ENCODE measurements at regions of chr3 and their contacts with region 1.

Region 1: DNA sequence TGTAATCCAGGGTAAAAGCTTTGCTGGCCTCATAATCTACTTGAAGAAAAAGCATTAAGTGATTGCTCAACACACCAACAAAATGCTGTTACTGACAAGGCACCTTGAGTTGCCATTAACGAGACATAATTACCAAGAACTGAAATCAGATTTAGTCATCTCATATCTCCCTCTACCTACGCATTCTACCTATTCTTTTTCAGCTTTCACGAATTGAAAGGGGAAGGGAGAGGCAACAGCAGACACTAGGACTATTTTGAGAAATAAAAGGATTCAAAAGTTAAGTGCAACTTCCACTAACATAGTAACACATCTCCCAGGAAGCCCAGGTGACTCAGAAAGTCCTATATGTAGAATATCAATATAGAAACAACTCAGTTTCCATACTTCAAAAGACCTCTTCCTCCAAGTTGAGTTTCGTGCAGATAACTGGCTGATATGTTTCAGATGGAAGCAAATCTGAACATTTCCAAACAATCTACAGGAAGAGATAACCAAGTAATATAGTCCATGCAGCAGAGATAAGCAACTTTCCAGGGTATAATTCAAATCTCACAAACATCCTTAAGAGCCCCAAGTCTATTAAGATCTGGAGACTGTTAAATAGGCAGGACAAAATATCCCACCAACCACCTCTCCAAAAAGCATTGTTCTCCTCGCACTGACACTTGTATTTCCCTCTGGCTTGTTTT is 1.9 kb downstream of the OSBPL10 start:
- DNase-seq: no peak
- H3K4me3 Mint-ChIP-seq: peak overlapping the region; percentile 57
- H3K27ac Mint-ChIP-seq: peak overlapping the region; percentile 50
- H3K4me1 Mint-ChIP-seq: peaks cover 28% of the 10 kb centered on the region
- H3K27me3 Mint-ChIP-seq: peaks cover 62% of the 10 kb centered on the region

Region 2: GRCh38 chr3:31903686-31904431 is 75.3 kb before region 1 on chr3:
- CTCF ChIA-PET with region 1: no interaction called
- POLR2A ChIA-PET with region 1: no interaction called
- intact Hi-C with region 1: no loop called
- DNase-seq: no peak
- H3K4me3 Mint-ChIP-seq: no peak overlapping the region
- H3K27ac Mint-ChIP-seq: no peak overlapping the region
- H3K4me1 Mint-ChIP-seq: peaks cover 12% of the 10 kb centered on the region
- H3K27me3 Mint-ChIP-seq: no peaks in the 10 kb centered on the region

Region 3: DNA sequence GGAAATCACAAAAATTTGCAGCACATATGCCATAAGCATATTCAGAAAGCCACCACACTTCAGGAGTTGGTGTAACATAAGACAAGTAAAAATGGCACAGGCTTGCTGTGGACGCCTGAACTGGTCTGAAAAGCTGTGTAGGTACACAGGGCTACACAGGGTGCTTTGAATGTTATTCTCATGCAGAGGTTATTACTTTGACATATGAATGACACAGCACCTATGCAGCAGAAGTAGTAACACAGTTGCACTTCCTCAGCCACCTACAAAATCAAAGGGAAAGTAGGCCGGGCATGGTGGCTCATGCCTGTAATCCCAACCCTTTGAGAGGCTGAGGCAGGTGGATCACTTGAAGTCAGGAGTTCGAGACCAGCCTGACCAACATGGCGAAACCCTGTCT is 52.6 kb before region 1 on chr3:
- CTCF ChIA-PET with region 1: no interaction called
- POLR2A ChIA-PET with region 1: interaction called, 3 read pairs
- intact Hi-C with region 1: loop called (anchors 1 kb)
- DNase-seq: no peak
- H3K4me3 Mint-ChIP-seq: no peak overlapping the region
- H3K27ac Mint-ChIP-seq: peak overlapping the region; percentile 26
- H3K4me1 Mint-ChIP-seq: peaks cover 23% of the 10 kb centered on the region
- H3K27me3 Mint-ChIP-seq: no peaks in the 10 kb centered on the region

Region 4: DNA sequence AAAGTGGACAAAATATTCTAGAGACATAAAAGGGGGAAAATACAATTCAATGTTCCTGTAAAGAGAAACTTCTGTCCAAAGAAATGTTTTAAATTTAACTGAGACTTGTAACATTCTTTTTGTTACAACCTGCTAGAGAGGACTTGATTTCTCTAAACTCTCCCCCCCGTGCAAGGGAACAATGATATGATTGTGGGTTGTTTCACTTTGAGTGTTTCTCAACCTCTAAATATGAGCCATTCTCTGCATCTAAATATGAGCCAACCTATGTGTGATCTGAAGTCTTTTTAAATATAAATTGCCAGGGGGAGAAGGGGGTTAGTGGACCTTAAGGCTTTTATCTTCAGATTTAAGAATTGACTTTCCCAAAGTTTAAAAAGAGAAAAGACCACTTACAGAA is 17.0 kb after region 1 on chr3:
- CTCF ChIA-PET with region 1: no interaction called
- POLR2A ChIA-PET with region 1: no interaction called
- intact Hi-C with region 1: loop called (anchors 2 kb)
- DNase-seq: no peak
- H3K4me3 Mint-ChIP-seq: no peak overlapping the region
- H3K27ac Mint-ChIP-seq: no peak overlapping the region
- H3K4me1 Mint-ChIP-seq: peaks cover 6% of the 10 kb centered on the region
- H3K27me3 Mint-ChIP-seq: peaks cover 38% of the 10 kb centered on the region

Region 5: DNA sequence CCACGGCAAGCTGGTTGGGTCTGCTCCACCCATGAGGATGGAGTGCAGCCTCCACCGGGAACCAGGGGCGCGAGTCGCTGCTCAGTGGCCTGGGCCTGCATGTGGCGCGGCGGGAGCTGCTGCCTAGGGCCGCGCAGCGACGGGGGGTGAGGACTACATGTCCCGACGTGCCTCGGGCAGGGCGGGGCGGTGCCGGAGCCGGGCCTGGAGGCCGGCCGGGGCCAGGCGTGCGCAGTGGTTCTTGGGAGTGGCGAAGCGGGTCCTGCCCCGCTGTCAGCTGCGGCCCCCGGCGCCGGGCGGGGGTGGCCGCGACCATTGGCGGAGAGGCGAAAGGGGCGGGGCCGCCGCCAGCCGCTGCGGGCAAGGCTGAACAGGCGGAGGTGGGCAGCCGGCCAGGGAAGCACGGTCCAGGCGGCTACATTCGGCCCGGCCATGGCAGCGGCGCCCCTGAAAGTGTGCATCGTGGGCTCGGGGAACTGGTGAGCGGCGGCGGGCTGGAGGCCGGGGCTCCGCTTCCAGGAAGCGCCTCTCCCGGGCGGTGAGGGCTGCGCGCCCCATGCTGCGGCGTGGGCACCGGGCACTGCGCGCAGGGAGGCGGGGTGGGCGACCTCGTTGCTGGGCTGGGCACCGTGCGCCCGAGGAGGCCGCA is 127.3 kb after region 1 on chr3 and contains the start of gene GPD1L:
- CTCF ChIA-PET with region 1: no interaction called
- POLR2A ChIA-PET with region 1: no interaction called
- intact Hi-C with region 1: loop called (anchors 2 kb)
- DNase-seq: peak; percentile 95
- H3K4me3 Mint-ChIP-seq: peak within 1 kb of the TSS; percentile 94
- H3K27ac Mint-ChIP-seq: peak within 1 kb of the TSS; percentile 76
- H3K4me1 Mint-ChIP-seq: peaks cover 37% of the 10 kb centered on the region
- H3K27me3 Mint-ChIP-seq: no peaks in the 10 kb centered on the region
- total RNA-seq, gene GPD1L: 10.9 to 12.2 TPM

Measured in activated CD4-positive, alpha-beta memory T cell treated with anti-CD3 and anti-CD28 coated beads for 36 hours (primary cell).